Gastrocnemius medialis (tissue), 4 donors: ENCODE measurements at regions of chr3 and their contacts with region 1.

Region 1: GRCh38 chr3:28745916-28746617 is 397.4 kb upstream of the AZI2 start:
- DNase-seq: peak; percentile 37 to 46
- ATAC-seq: peak; percentile 72 to 90
- H3K4me3 ChIP-seq: no peak overlapping the region
- H3K27ac ChIP-seq: peak overlapping the region; percentile 79 to 92 (median 90)
- H3K4me1 ChIP-seq: peaks cover 52 to 54% of the 10 kb centered on the region in 2 donors
- H3K27me3 ChIP-seq: no peaks in the 10 kb centered on the region
- CTCF ChIP-seq: no peak
- POLR2A ChIP-seq: no peak

Region 2: GRCh38 chr3:28575746-28576613 is 170.1 kb before region 1 on chr3:
- in situ Hi-C with region 1: no loop called
- intact Hi-C with region 1: loop called (anchors 10 kb)
- DNase-seq: peak in 1 of 2 donors; percentile 17
- ATAC-seq: peak; percentile 69 to 72
- H3K4me3 ChIP-seq: peak overlapping the region; percentile 70 to 84 (median 76)
- H3K27ac ChIP-seq: peak overlapping the region; percentile 64 to 81 (median 72)
- H3K4me1 ChIP-seq: peaks cover 5 to 9% of the 10 kb centered on the region in 2 donors
- H3K27me3 ChIP-seq: no peaks in the 10 kb centered on the region
- CTCF ChIP-seq: no peak
- POLR2A ChIP-seq: no peak

Region 3: GRCh38 chr3:28674212-28674611 is 71.9 kb before region 1 on chr3:
- in situ Hi-C with region 1: no loop called
- intact Hi-C with region 1: loop called (anchors 5 kb)
- DNase-seq: peak; percentile 26 to 32
- ATAC-seq: peak; percentile 87
- H3K4me3 ChIP-seq: no peak overlapping the region
- H3K27ac ChIP-seq: peak overlapping the region in 2 of 4 donors; percentile 19 to 86
- H3K4me1 ChIP-seq: peaks cover 17 to 44% of the 10 kb centered on the region in 2 donors
- H3K27me3 ChIP-seq: no peaks in the 10 kb centered on the region
- CTCF ChIP-seq: no peak
- POLR2A ChIP-seq: no peak

Region 4: GRCh38 chr3:28824316-28824715 is 78.2 kb after region 1 on chr3:
- in situ Hi-C with region 1: no loop called
- intact Hi-C with region 1: no loop called
- DNase-seq: no peak
- ATAC-seq: no peak
- H3K4me3 ChIP-seq: no peak overlapping the region
- H3K27ac ChIP-seq: no peak overlapping the region
- H3K4me1 ChIP-seq: no peaks in the 10 kb centered on the region
- H3K27me3 ChIP-seq: no peaks in the 10 kb centered on the region
- CTCF ChIP-seq: no peak
- POLR2A ChIP-seq: no peak

Region 5: GRCh38 chr3:28840976-28841376 is 94.9 kb after region 1 on chr3:
- in situ Hi-C with region 1: no loop called
- intact Hi-C with region 1: loop called (anchors 5 kb)
- DNase-seq: no peak
- ATAC-seq: no peak
- H3K4me3 ChIP-seq: no peak overlapping the region
- H3K27ac ChIP-seq: peak overlapping the region in 1 of 4 donors; percentile 52
- H3K4me1 ChIP-seq: peaks cover 15 to 21% of the 10 kb centered on the region in 2 donors
- H3K27me3 ChIP-seq: no peaks in the 10 kb centered on the region
- CTCF ChIP-seq: no peak
- POLR2A ChIP-seq: no peak

Region 6: DNA sequence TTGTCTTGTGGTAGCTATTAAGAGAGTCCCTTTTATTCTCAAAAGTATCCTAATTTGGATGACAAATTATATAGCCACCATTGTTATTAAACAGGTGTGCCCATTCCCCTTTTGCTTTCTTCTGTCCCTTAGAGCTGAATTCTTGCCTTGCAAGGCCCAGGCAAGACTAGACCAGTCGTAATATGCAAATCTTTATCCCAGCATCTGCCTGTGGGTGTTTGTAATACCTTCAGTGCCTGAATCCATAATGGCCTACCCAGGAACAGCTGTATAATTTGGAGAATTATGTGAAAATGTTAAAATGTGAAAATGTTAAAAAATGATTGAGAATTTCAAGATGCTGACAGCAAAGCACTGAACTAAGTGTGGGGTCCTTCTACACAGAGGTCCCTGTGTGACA is 131.8 kb after region 1 on chr3:
- in situ Hi-C with region 1: no loop called
- intact Hi-C with region 1: loop called (anchors 2 kb)
- DNase-seq: no peak
- ATAC-seq: no peak
- H3K4me3 ChIP-seq: no peak overlapping the region
- H3K27ac ChIP-seq: no peak overlapping the region
- H3K4me1 ChIP-seq: peaks cover 24 to 36% of the 10 kb centered on the region in 2 donors
- H3K27me3 ChIP-seq: no peaks in the 10 kb centered on the region
- CTCF ChIP-seq: no peak
- POLR2A ChIP-seq: no peak